ENCODE measurements at regions of chr15 and their contacts with region 1.

Region 1: DNA sequence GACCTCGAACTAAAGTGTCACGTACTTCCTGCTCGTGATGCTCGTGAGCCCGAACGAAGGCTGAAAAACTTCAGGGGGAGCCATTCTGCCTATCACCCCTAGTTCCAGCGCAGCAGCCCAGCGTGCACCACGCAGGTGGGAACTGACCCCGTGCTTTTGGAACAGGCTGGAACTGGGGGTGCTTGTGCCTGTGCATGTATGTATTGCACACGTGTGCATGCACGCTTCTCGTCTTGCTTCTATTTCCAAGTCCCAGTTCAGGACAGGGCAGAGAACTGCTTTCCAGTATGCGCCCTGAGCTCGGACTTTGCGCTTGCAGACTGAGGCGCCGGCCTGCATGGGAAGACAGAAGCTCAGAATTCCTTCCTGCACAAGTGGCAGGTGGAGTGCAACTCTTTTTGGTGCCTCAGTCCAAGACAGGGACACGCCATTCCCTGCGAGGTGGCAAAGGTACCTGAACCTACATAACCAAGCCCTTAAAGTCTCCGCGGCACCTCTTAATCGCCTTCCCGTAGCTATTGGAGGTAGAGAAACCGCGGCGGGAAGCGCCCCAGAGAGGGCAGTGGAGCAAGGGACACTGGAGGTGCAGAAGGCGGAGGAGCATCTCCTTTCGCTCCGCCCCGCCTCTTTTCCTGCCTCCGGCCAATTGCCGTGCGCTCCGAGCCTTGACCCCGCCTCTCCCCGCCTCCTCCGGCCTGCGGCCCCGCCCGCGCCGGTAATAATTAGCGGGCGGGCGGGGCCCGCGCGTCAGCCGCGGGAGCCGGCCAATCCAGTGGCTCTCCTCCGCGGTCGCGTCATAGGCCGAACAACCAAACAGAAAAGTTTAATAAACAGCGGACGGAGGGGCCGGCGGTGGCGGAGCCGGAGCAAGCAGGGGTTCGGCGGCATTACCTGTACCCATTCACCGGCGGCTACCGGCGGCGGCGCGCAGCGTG is at the start of gene ZFAND6:
- DNase-seq: peak; percentile 97
- H3K4me3 ChIP-seq: peak within 1 kb of the TSS; percentile 90 to 98 (median 92)
- H3K27ac ChIP-seq: peak within 1 kb of the TSS; percentile 91 to 98 (median 96)
- H3K4me1 ChIP-seq: peaks cover 14 to 39% (median 35%) of the 10 kb centered on the region in 4 donors
- H3K27me3 ChIP-seq: no peaks in the 10 kb centered on the region
- CTCF ChIP-seq: peak in 2 of 3 experiments; percentile 2 to 23
- EP300 ChIP-seq: no peak
- POLR2A ChIP-seq: peak; percentile 57
- total RNA-seq, gene ZFAND6: 80.2 to 134 (median 107) TPM

Region 2: GRCh38 chr15:79923515-79924395 is 135.4 kb before region 1 on chr15:
- intact Hi-C with region 1: loop called (anchors 2 kb)
- DNase-seq: peak; percentile 97
- H3K4me3 ChIP-seq: peak overlapping the region; percentile 65 to 90 (median 86)
- H3K27ac ChIP-seq: peak overlapping the region; percentile 86 to 96 (median 92)
- H3K4me1 ChIP-seq: peaks cover 11 to 17% (median 14%) of the 10 kb centered on the region in 4 donors
- H3K27me3 ChIP-seq: no peaks in the 10 kb centered on the region
- CTCF ChIP-seq: no peak
- EP300 ChIP-seq: no peak
- POLR2A ChIP-seq: peak; percentile 64